ENCODE measurements at regions of chr2 and their contacts with region 1.

Region 1: GRCh38 chr2:112584134-112584890 is at the start of gene CHCHD5:
- DNase-seq: peak; percentile 81
- ATAC-seq: peak; percentile 91
- H3K4me3 ChIP-seq: peak within 1 kb of the TSS; percentile 89
- H3K27ac ChIP-seq: peak within 1 kb of the TSS; percentile 95
- H3K4me1 ChIP-seq: peaks cover 20% of the 10 kb centered on the region
- H3K27me3 ChIP-seq: no peaks in the 10 kb centered on the region
- CTCF ChIP-seq: peak in 1 of 3 experiments; percentile 21; a peak in 2 of 6 replicates
- EP300 ChIP-seq: no peak
- POLR2A ChIP-seq: peak; percentile 83
- RAD21 ChIP-seq: no peak
- polyA plus RNA-seq, gene CHCHD5: 65.1 to 85.6 TPM

Region 2: DNA sequence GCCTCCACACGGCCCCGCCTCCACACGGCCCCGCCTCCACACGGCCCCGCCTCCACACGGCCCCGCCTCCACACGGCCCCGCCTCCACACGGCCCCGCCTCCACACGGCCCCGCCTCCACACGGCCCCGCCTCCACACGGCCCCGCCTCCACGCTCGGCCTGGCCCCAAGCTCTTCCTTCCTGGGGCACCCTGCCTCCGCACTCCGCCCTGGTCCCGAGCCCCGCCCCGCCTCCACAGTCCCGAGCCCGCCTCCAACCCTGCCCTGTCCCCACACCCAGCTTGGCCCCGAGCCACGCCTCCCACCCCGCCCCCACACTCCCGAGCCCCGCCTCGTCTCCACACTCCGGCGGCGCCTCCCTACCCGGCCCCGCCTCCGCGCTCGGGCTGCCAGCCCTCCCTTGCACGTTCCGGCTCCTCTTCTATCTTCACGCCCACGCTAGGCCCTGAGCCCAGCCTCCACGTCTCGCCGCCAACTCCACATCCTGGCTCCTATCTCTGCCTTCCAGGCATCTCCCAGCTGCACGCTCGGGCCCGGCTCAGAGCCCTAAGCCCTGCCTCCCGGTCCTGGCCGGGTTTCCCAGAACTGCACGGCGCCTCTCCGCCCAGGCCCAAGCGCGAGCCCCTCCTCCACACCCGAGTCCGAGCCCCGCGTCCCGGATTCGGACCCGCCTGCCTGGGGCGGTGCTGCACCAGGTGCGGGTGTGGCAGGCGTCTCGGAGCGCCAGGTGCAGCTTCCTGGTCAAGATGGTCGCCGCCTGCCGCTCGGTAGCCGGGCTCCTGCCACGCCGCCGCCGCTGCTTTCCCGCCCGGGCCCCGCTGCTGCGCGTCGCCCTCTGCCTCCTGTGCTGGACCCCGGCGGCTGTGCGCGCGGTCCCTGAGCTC is 529.2 kb before region 1 on chr2 and contains the start of gene TMEM87B:
- CTCF ChIA-PET with region 1: no interaction called
- POLR2A ChIA-PET with region 1: interaction called, 3 read pairs
- RAD21 ChIA-PET with region 1: interaction called, 9 read pairs
- SMC1A ChIA-PET with region 1: no interaction called
- in situ Hi-C with region 1: no loop called
- intact Hi-C with region 1: loop called (anchors 5 kb)
- DNase-seq: peak; percentile 86
- ATAC-seq: peak; percentile 79
- H3K4me3 ChIP-seq: peak within 1 kb of the TSS; percentile 90
- H3K27ac ChIP-seq: peak within 1 kb of the TSS; percentile 64
- H3K4me1 ChIP-seq: peaks cover 5% of the 10 kb centered on the region
- H3K27me3 ChIP-seq: no peaks in the 10 kb centered on the region
- CTCF ChIP-seq: no peak
- EP300 ChIP-seq: 0 out of 4 replicates have a peak, but pooled peaks of 1 of the 2 experiments have one; percentile 32
- POLR2A ChIP-seq: peak; percentile 86
- RAD21 ChIP-seq: no peak
- polyA plus RNA-seq, gene TMEM87B: 5.7 to 8.2 TPM

Region 3: GRCh38 chr2:112121682-112122254 is 462.5 kb before region 1 on chr2:
- CTCF ChIA-PET with region 1: interaction called, 5 read pairs
- POLR2A ChIA-PET with region 1: no interaction called
- RAD21 ChIA-PET with region 1: interaction called, 5 read pairs
- SMC1A ChIA-PET with region 1: interaction called, 6 read pairs
- in situ Hi-C with region 1: no loop called
- intact Hi-C with region 1: loop called (anchors 5 kb)
- DNase-seq: no peak
- ATAC-seq: no peak
- H3K4me3 ChIP-seq: no peak overlapping the region
- H3K27ac ChIP-seq: no peak overlapping the region
- H3K4me1 ChIP-seq: no peaks in the 10 kb centered on the region
- H3K27me3 ChIP-seq: no peaks in the 10 kb centered on the region
- CTCF ChIP-seq: peak; percentile 38 to 55 (median 41); a peak in 5 of 6 replicates
- EP300 ChIP-seq: no peak
- POLR2A ChIP-seq: no peak
- RAD21 ChIP-seq: peak; percentile 59

Region 4: DNA sequence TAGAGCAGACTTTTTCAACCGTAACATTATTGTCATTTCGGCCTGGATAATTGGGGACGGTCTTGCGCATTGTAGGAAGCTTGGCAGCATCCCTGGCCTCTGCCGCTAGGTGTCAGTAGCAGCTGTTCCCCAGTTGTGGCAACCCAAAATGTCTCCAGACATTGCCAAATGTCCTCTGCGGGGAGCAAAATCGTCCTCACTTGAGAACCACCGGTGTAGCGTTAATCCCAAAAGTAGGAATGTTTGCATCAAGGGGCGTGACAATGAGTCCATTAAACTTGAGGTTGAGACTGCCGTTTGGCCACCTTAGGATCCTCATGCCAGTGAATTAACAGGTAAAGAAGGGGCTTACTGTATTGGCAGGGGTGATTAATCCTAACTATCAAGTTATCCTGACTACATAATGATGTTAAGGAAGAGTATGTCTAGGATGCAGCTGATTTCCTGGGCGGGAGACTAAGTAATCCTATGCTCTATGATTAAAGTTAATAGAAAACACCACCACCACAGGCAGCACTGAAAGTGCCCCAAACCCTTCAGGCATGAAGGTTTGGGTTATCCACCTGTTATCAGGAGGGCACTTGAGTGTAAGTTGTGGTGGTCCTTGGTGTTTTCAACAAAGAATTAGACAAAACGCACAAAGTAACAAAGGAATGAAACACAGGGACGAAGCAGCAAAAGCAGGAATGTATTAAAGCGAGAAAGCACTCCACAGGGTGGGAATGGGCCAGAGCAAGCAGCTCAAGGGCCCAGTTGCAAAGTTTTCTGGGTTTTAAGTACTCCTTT is 324.6 kb before region 1 on chr2:
- CTCF ChIA-PET with region 1: interaction called, 7 read pairs
- POLR2A ChIA-PET with region 1: no interaction called
- RAD21 ChIA-PET with region 1: interaction called, 11 read pairs
- SMC1A ChIA-PET with region 1: interaction called, 4 read pairs
- in situ Hi-C with region 1: no loop called
- intact Hi-C with region 1: loop called (anchors 2 kb)
- DNase-seq: peak; percentile 35
- ATAC-seq: peak; percentile 70
- H3K4me3 ChIP-seq: no peak overlapping the region
- H3K27ac ChIP-seq: no peak overlapping the region
- H3K4me1 ChIP-seq: peaks cover 3% of the 10 kb centered on the region; the same call in 1 of the 2 replicates
- H3K27me3 ChIP-seq: no peaks in the 10 kb centered on the region
- CTCF ChIP-seq: peak; percentile 94 to 99 (median 99)
- EP300 ChIP-seq: no peak
- POLR2A ChIP-seq: 0 out of 2 replicates have a peak, but pooled peaks have one; percentile 27
- RAD21 ChIP-seq: peak; percentile 88

Region 5: DNA sequence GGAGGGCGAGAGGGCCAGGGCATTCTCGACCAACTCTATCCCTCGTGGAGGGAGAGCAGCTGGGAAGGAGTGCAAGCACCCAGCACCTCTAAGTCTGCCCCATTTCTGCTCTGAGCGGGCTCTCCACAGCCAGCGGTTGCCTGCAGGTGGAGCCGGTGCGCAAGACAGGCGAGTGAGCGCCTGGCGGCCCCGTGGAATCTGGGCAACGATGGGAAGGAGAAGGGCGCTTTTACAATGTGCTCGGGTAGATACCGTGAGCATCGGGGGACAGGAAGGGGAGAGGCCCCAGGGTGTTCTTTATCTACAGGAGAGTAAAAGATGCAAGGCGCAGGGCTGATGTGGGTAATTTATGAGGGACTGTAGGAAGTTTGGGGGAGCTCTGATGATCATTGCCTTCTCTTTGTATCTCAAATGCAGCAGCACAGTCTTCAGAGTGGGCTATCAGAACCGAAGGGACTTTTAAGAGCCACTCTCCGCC is 103.2 kb before region 1 on chr2:
- CTCF ChIA-PET with region 1: interaction called, 38 read pairs
- POLR2A ChIA-PET with region 1: interaction called, 12 read pairs
- RAD21 ChIA-PET with region 1: interaction called, 11 read pairs
- SMC1A ChIA-PET with region 1: interaction called, 5 read pairs
- in situ Hi-C with region 1: loop called (anchors 5 kb)
- intact Hi-C with region 1: loop called (anchors 1 kb)
- DNase-seq: peak; percentile 26
- ATAC-seq: peak; percentile 90
- H3K4me3 ChIP-seq: peak overlapping the region; percentile 87
- H3K27ac ChIP-seq: peak overlapping the region; percentile 66
- H3K4me1 ChIP-seq: peaks cover 14% of the 10 kb centered on the region
- H3K27me3 ChIP-seq: no peaks in the 10 kb centered on the region
- CTCF ChIP-seq: peak; percentile 85 to 96 (median 95)
- EP300 ChIP-seq: no peak
- POLR2A ChIP-seq: no peak; the same call in none of the 2 replicates
- RAD21 ChIP-seq: peak; percentile 83

Region 6: GRCh38 chr2:112542123-112542983 is 42.0 kb before region 1 on chr2 and contains the start of gene POLR1B:
- CTCF ChIA-PET with region 1: interaction called, 13 read pairs
- POLR2A ChIA-PET with region 1: no interaction called
- RAD21 ChIA-PET with region 1: interaction called, 4 read pairs
- SMC1A ChIA-PET with region 1: interaction called, 12 read pairs
- in situ Hi-C with region 1: no loop called
- intact Hi-C with region 1: no loop called
- DNase-seq: peak; percentile 65
- ATAC-seq: peak; percentile 88
- H3K4me3 ChIP-seq: peak within 1 kb of the TSS; percentile 85
- H3K27ac ChIP-seq: peak within 1 kb of the TSS; percentile 81
- H3K4me1 ChIP-seq: no peaks in the 10 kb centered on the region
- H3K27me3 ChIP-seq: no peaks in the 10 kb centered on the region
- CTCF ChIP-seq: no peak
- EP300 ChIP-seq: no peak; a peak in 1 of 4 replicates
- POLR2A ChIP-seq: peak; percentile 79
- RAD21 ChIP-seq: no peak
- polyA plus RNA-seq, gene POLR1B: 13.4 to 14.3 TPM

Region 7: DNA sequence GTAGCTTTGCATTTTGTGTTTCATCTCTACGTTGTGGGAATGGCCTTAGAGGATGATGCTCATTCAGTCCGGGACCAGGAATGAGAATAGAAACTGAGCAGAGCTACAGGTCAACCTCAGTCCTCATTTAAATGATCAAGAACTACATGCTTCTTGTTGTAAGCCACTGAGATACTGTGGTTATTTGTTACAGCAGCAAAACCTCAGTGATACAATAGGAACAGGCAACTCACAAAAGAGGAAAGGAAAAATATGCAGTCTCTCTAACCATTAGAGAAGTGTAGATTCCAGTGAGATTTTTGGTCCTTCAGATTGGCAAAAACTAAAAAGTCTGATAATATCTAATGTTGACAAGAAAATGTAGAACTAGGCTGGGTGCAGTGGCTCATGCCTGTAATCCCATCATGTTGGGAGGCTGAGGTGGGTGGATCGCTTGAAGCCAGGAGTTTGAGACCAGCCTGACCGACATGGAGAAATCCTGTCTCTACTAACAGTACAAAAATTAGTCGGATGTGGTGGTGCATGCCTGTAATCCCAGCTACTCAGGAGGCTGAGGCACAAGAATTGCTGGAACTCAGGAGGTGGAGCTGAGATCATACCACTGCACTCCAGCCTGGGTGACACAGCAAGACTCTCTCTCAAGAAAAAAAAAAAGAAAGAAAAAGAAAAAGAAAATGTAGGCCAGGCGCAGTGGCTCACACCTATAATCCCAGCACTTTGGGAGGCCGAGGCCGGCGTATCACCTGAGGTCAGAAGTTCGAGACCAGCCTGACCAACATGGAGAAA is 13.4 kb after region 1 on chr2:
- CTCF ChIA-PET with region 1: interaction called, 18 read pairs
- POLR2A ChIA-PET with region 1: no interaction called
- RAD21 ChIA-PET with region 1: interaction called, 8 read pairs
- SMC1A ChIA-PET with region 1: interaction called, 4 read pairs
- in situ Hi-C with region 1: no loop called
- intact Hi-C with region 1: no loop called
- DNase-seq: no peak
- ATAC-seq: no peak
- H3K4me3 ChIP-seq: no peak overlapping the region
- H3K27ac ChIP-seq: no peak overlapping the region
- H3K4me1 ChIP-seq: no peaks in the 10 kb centered on the region; the same call in 1 of the 2 replicates
- H3K27me3 ChIP-seq: no peaks in the 10 kb centered on the region
- CTCF ChIP-seq: no peak
- EP300 ChIP-seq: no peak
- POLR2A ChIP-seq: no peak
- RAD21 ChIP-seq: no peak

Region 8: DNA sequence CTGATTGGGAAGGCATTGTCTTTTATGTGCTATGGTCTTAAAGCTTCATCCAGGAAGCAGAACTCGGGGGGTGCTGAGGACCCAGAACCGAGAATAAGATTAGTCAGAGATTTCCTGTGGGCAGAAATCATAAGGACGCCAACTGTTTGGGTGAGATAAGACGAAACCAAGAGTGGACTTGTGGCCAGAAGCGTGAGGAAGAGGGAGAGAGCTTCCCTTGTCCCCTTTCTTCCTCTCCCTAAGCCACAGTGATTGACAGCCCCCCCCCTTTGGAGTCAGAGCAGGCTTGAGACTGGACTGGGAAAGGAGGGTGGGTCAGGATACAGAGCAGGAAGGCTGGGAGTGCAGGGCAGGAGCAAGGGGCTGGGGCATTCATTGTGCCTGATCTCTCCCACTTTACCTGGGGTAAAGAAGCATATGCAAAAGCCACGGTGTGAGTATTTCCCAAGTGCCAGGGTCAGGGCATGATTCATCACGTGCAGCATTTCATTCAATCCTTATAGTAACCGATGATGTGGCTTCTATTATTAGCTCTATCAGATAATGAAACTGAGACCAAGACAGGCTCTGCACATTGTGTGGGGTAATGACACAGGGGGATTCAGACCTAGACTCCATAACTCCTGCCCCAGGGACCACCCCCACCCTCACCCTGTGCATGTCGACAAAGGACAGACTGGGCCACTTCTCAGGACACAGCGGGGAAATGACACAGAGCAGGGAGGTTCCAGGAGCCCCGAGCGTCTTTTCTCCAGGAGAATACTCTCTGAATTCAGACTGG is 540.1 kb after region 1 on chr2:
- CTCF ChIA-PET with region 1: no interaction called
- POLR2A ChIA-PET with region 1: no interaction called
- RAD21 ChIA-PET with region 1: no interaction called
- SMC1A ChIA-PET with region 1: no interaction called
- in situ Hi-C with region 1: no loop called
- intact Hi-C with region 1: no loop called
- DNase-seq: peak; percentile 38
- ATAC-seq: peak; percentile 78
- H3K4me3 ChIP-seq: peak overlapping the region; percentile 9; the same call in 1 of the 2 replicates
- H3K27ac ChIP-seq: peak overlapping the region; percentile 6; the same call in 1 of the 2 replicates
- H3K4me1 ChIP-seq: peaks cover 11% of the 10 kb centered on the region
- H3K27me3 ChIP-seq: no peaks in the 10 kb centered on the region
- CTCF ChIP-seq: no peak
- EP300 ChIP-seq: no peak
- POLR2A ChIP-seq: no peak
- RAD21 ChIP-seq: no peak